Naive thymus-derived CD8-positive, alpha-beta T cell (primary cell): ENCODE measurements at regions of chr7 and their contacts with region 1.

Region 1: GRCh38 chr7:1054861-1055450 is 10.6 kb downstream of the GPR146 start:
- DNase-seq: peak; percentile 27 to 82 (median 52)
- ATAC-seq: peak; percentile 90 to 92
- H3K4me3 Mint-ChIP-seq: peak overlapping the region; percentile 80 to 94 (median 88)
- H3K27ac Mint-ChIP-seq: peak overlapping the region; percentile 40 to 91 (median 76)
- H3K4me1 Mint-ChIP-seq: peaks cover 7 to 36% (median 24%) of the 10 kb centered on the region in 4 donors
- H3K27me3 Mint-ChIP-seq: no peaks in the 10 kb centered on the region

Region 2: GRCh38 chr7:923108-924041 is 131.6 kb before region 1 on chr7:
- POLR2A ChIA-PET with region 1: no interaction called
- DNase-seq: peak; percentile 68 to 95 (median 89)
- ATAC-seq: peak; percentile 86 to 92
- H3K4me3 Mint-ChIP-seq: peak overlapping the region; percentile 82 to 93 (median 87)
- H3K27ac Mint-ChIP-seq: peak overlapping the region; percentile 92 to 97 (median 94)
- H3K4me1 Mint-ChIP-seq: peaks cover 11 to 57% (median 43%) of the 10 kb centered on the region in 4 donors
- H3K27me3 Mint-ChIP-seq: no peaks in the 10 kb centered on the region

Region 3: DNA sequence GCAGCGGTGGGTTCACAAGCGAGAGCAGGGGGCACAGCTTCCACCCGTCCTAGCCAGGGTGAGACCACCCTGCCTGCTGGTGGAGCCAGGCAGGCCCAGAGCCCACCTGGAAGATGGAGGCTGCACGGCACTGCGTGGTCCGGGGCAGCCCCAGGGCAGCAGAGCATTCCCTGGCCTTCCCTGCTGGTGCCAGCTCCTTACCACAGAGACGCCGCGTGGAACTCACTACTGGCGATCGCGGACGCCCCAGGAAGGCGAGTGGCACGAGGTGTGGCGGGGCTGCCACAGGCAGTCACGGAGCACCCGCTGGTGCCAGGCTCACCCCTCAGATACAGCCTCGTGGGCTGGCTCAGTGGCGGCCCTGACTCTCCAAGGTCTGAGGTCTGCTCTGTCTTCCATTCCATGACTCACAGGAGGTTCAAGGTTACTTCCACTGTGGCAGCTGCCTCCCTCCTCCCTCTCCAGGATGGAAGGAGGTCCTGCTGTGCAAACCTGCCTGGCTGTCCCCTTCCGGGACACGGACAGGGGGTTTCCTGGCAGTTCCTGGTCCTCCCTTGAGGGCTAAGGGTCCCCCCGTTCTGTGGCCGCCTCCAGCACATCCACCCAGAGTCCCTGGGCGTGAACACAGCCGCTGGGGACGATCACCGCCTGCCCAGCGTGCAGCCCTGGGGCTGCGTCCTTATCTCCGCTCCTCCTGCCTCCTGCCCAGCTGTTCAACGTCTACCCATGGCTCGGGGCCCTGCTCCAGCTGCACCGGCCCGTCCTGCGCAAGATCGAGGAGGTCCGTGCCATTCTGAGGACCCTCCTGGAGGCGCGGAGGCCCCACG is 68.8 kb before region 1 on chr7:
- POLR2A ChIA-PET with region 1: no interaction called
- DNase-seq: no peak
- ATAC-seq: no peak
- H3K4me3 Mint-ChIP-seq: no peak overlapping the region
- H3K27ac Mint-ChIP-seq: no peak overlapping the region
- H3K4me1 Mint-ChIP-seq: peaks cover 0 to 4% (median 1%) of the 10 kb centered on the region in 4 donors
- H3K27me3 Mint-ChIP-seq: peaks cover 2 to 18% (median 8%) of the 10 kb centered on the region in 5 donors

Region 4: DNA sequence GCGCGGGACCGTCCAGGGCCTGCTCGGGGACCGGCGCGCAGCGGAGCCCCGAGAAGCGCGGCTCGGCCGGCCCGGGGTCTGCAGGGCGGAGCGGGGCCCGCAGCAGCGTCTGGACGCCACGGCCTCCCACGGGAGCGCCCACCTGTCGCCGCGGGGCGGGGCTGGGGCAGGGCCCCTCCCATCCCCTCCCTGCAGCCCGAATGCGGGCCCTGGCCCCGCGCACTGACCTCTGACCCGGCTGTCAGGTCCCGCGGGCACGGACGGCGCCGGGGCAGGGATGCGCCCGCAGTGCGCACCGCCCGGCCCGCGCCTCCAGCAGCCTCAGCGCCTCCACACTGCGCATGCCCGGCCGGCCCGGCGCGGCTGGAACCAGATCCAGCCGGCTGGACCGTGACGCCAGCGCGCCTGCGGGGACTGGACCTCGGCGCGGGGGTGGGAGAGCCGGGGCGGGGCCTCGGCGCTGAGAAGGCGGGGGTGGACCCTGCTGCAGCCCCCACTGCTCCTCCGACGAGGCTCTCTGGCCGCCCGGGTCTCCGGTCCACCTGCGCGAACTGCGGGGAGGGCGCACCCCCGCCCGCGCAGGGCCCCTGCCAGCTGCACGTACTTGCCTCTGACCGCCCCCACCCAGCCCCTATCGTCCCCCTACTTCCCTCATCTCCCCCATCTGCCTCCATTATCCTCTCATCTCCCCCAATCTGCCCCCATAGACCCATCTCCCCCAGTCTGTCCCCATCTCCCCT is 26.8 kb before region 1 on chr7:
- POLR2A ChIA-PET with region 1: interaction called, 26 read pairs
- DNase-seq: peak; percentile 65 to 91 (median 85)
- ATAC-seq: peak; percentile 80 to 87
- H3K4me3 Mint-ChIP-seq: peak overlapping the region in 8 of 10 donors; percentile 72 to 88 (median 82)
- H3K27ac Mint-ChIP-seq: peak overlapping the region in 7 of 10 donors; percentile 66 to 93 (median 87)
- H3K4me1 Mint-ChIP-seq: peaks cover 18 to 61% (median 49%) of the 10 kb centered on the region in 4 donors
- H3K27me3 Mint-ChIP-seq: peaks cover 0 to 2% (median 0%) of the 10 kb centered on the region in 5 donors